WTC11 (cell line): ENCODE measurements at regions of chr4 and their contacts with region 1.

Region 1: GRCh38 chr4:13248621-13249298 is 235.4 kb downstream of the RAB28 start:
- DNase-seq: no peak
- ATAC-seq: no peak
- H3K4me3 Mint-ChIP-seq: no peak overlapping the region
- H3K27ac Mint-ChIP-seq: no peak overlapping the region
- H3K4me1 Mint-ChIP-seq: peaks cover 14% of the 10 kb centered on the region
- H3K27me3 Mint-ChIP-seq: no peaks in the 10 kb centered on the region
- CTCF ChIP-seq: peak; percentile 15; the same call in 1 of the 2 replicates

Region 2: GRCh38 chr4:12852338-12853307 is 396.1 kb before region 1 on chr4:
- CTCF ChIA-PET with region 1: interaction called, 11 read pairs
- POLR2A ChIA-PET with region 1: no interaction called
- DNase-seq: no peak
- ATAC-seq: peak; percentile 98
- H3K4me3 Mint-ChIP-seq: no peak overlapping the region
- H3K27ac Mint-ChIP-seq: no peak overlapping the region
- H3K4me1 Mint-ChIP-seq: peaks cover 6% of the 10 kb centered on the region
- H3K27me3 Mint-ChIP-seq: no peaks in the 10 kb centered on the region
- CTCF ChIP-seq: peak; percentile 31; the same call in 1 of the 2 replicates

Region 3: GRCh38 chr4:13219971-13220370 is 28.8 kb before region 1 on chr4:
- CTCF ChIA-PET with region 1: interaction called, 10 read pairs
- POLR2A ChIA-PET with region 1: no interaction called
- DNase-seq: no peak
- ATAC-seq: no peak
- H3K4me3 Mint-ChIP-seq: no peak overlapping the region
- H3K27ac Mint-ChIP-seq: no peak overlapping the region
- H3K4me1 Mint-ChIP-seq: peaks cover 12% of the 10 kb centered on the region
- H3K27me3 Mint-ChIP-seq: no peaks in the 10 kb centered on the region; the same call in 1 of the 2 replicates
- CTCF ChIP-seq: no peak